Psoas muscle (tissue), 8 donors: ENCODE measurements at regions of chr7 and their contacts with region 1.

Region 1: GRCh38 chr7:31744294-31744874 is 57.4 kb downstream of the PPP1R17 start:
- DNase-seq: peak; percentile 51 to 55
- ATAC-seq: peak in 3 of 4 donors; percentile 48 to 77 (median 71)
- H3K4me3 ChIP-seq: no peak overlapping the region
- H3K27ac ChIP-seq: no peak overlapping the region
- H3K4me1 ChIP-seq: no peaks in the 10 kb centered on the region
- H3K27me3 ChIP-seq: peaks cover 0 to 6% (median 0%) of the 10 kb centered on the region in 3 donors
- CTCF ChIP-seq: peak; percentile 82

Region 2: DNA sequence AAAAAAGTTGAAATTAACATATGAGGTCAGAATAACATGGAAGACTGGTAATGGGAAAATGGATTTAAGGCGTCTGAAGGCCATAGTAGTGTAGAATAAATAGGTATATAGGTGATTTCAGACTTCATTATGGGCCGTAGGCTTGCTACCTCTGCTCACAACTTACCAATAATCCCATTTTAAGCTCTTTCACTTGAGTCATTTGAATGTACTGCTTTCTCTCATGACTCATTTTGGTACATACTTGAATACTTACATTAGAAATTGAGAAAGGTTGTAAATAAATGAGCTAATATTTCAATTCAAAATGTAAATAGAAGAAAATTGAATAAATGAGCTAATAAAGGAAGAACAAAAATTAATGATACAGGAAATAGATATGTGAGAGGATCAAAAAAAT is 361.7 kb before region 1 on chr7:
- intact Hi-C with region 1: no loop called
- DNase-seq: no peak
- ATAC-seq: no peak
- H3K4me3 ChIP-seq: no peak overlapping the region
- H3K27ac ChIP-seq: no peak overlapping the region
- H3K4me1 ChIP-seq: no peaks in the 10 kb centered on the region
- H3K27me3 ChIP-seq: no peaks in the 10 kb centered on the region
- CTCF ChIP-seq: no peak

Region 3: GRCh38 chr7:31788445-31788844 is 44.1 kb after region 1 on chr7:
- intact Hi-C with region 1: no loop called
- DNase-seq: no peak
- ATAC-seq: no peak
- H3K4me3 ChIP-seq: no peak overlapping the region
- H3K27ac ChIP-seq: no peak overlapping the region
- H3K4me1 ChIP-seq: no peaks in the 10 kb centered on the region
- H3K27me3 ChIP-seq: no peaks in the 10 kb centered on the region
- CTCF ChIP-seq: no peak

Region 4: DNA sequence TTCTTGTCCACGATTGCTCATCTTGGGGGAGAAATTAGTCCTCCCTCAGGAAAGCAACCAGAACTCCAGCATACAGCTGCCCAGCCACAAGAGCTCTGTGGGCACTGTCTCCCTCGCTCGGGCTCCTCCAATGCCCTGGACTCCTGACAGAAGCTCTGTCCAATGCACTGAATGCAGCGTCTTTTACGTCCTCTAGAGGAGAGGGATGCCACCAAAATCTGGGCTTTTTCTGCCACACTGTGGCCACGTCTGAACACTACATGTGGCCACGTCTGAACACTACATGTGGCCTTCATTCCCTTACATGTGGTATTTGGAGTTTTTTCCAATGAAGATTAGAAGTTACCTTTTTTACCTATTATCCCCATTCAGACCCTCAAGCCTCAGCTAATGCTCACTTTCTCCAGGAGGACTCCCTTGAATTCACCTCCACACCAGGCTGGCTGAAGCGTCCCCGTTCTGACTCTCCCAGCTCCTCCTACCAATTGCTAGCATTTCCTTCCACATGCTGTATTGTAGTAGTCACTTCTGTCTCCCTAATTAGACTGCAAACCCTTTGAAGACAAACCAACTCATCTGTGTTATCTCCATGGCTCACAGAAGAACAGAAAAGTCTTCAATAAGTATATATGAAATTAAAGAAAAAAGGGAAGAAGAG is 460.1 kb after region 1 on chr7:
- intact Hi-C with region 1: loop called (anchors 2 to 5 kb)
- DNase-seq: peak; percentile 38 to 65
- ATAC-seq: peak; percentile 39 to 81 (median 66)
- H3K4me3 ChIP-seq: peak overlapping the region; percentile 7
- H3K27ac ChIP-seq: no peak overlapping the region
- H3K4me1 ChIP-seq: no peaks in the 10 kb centered on the region
- H3K27me3 ChIP-seq: peaks cover 0 to 4% (median 0%) of the 10 kb centered on the region in 3 donors
- CTCF ChIP-seq: peak; percentile 57

Region 5: GRCh38 chr7:32357535-32358277 is 613.3 kb after region 1 on chr7:
- intact Hi-C with region 1: loop called (anchors 5 to 10 kb)
- DNase-seq: no peak
- ATAC-seq: no peak
- H3K4me3 ChIP-seq: no peak overlapping the region
- H3K27ac ChIP-seq: no peak overlapping the region
- H3K4me1 ChIP-seq: no peaks in the 10 kb centered on the region
- H3K27me3 ChIP-seq: no peaks in the 10 kb centered on the region
- CTCF ChIP-seq: no peak

Region 6: DNA sequence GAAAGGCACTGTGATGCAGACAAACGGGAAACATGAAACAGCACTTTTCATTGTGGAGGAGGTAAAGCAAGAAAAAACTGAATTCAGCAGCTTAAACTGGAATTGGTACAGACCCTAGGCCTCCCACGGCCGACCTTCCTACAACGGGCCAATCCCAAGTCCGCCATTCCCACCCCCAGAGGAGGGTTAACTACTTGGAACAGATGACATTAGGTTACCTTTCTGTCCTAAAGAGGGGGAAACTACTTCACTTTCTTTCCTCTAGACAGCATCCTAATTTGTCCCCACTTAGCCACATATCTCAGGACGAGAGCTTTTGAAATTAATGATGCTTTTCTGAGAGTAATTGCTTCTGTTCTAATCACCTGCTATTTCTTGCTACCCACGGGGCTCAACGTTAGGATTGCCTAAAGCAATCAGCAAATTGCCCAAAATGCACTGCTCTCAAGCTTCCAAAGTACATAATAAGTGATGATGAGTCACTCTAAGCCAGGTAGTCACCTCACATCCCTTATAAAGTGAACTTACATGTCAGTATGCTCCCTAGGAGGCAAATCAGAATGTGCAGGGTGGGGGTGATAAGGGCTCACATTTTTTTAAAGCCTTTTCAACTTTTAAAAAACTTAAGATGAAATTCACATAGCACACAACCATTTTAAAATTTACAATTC is 709.1 kb after region 1 on chr7:
- intact Hi-C with region 1: no loop called
- DNase-seq: no peak
- ATAC-seq: no peak
- H3K4me3 ChIP-seq: no peak overlapping the region
- H3K27ac ChIP-seq: no peak overlapping the region
- H3K4me1 ChIP-seq: no peaks in the 10 kb centered on the region
- H3K27me3 ChIP-seq: peaks cover 0 to 3% (median 0%) of the 10 kb centered on the region in 3 donors
- CTCF ChIP-seq: no peak

Region 7: DNA sequence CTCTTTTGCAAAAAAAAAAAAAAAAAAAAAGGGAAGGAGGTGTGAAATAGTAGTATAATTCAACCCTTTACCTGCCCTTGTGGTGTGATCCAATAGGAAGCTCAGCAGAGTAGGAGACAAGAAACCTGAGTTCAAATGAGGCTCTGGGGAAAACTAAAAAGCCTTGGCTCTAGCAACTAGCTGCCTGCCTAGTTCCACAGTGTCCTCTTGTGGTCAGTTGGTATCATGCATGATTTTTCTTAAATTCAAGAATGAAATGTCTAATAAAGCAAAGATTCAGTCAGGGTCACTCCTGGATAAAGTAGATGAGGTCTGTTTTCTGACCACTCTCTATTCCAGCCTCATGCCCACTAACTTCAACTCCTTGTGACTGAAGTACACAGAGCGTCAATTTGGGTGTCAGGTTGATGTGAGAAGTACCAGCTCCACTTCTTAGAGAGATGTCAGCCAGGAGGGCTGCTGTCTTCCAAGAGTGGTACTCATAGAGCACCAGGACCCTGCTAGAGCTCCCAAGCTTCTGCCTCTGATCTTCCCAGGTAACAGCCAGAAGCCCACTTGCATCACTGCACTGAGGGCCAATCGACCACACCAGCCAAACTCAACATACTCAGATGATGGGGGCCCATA is 735.3 kb after region 1 on chr7:
- intact Hi-C with region 1: loop called (anchors 5 to 10 kb)
- DNase-seq: no peak
- ATAC-seq: peak in 1 of 4 donors; percentile 33
- H3K4me3 ChIP-seq: no peak overlapping the region
- H3K27ac ChIP-seq: no peak overlapping the region
- H3K4me1 ChIP-seq: no peaks in the 10 kb centered on the region
- H3K27me3 ChIP-seq: no peaks in the 10 kb centered on the region
- CTCF ChIP-seq: peak; percentile 69